B cell (primary cell): ENCODE measurements at regions of chr1 and their contacts with region 1.

Region 1: DNA sequence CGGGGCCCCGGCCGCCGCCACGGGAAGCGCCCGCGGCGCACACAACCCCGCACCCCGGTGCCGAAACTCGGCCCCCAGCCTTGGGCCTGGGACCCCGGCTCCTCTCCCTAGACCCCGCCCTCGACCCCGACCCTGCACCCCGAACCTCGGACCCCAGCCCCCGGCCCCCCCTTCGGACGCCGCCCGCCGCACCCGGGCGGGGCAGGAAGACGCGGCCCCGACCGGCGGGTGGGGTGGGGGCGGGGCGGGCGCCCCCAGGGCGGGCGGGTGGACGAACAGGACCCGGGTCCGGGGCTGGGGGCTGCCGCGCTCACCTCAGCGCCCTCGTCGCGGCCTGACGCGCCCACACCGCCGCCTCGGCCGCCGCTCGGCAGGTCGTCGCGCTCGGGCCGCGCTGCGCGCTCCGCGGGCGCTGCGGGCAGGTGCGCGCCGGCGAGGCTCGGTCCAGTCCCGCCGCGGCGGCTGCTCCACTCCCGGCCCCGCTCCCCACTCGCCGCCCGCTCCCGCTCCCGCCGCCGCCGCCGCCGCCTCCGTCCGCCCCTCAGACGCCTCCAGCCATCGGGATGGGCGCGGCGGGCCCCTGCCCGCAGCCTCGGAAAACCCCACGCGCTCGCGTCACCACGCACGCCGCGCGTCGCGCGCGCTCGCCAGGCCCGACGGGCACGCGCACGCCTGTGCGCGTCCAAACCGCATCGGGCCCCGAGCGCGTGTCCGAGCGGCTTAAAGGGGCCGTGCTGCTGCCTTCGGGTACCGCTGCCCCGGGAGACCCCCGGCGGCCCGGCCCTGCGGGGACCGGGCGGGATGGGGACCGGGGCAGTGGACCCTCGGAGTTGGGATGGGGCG is at the start of gene GNB1:
- DNase-seq: peak; percentile 98
- ATAC-seq: peak; percentile 60
- H3K4me3 ChIP-seq: peak within 1 kb of the TSS; percentile 63 to 88 (median 79)
- H3K4me3 Mint-ChIP-seq: peak within 1 kb of the TSS; percentile 91
- H3K27ac ChIP-seq: peak within 1 kb of the TSS; percentile 72 to 86
- H3K27ac Mint-ChIP-seq: peak within 1 kb of the TSS; percentile 96
- H3K4me1 ChIP-seq: peaks cover 53 to 74% of the 10 kb centered on the region in 2 donors
- H3K4me1 Mint-ChIP-seq: peaks cover 60% of the 10 kb centered on the region
- H3K27me3 ChIP-seq: no peaks in the 10 kb centered on the region
- H3K27me3 Mint-ChIP-seq: no peaks in the 10 kb centered on the region
- CTCF ChIP-seq: no peak
- total RNA-seq, gene GNB1: 249 and 291 TPM in 2 replicates

Region 2: DNA sequence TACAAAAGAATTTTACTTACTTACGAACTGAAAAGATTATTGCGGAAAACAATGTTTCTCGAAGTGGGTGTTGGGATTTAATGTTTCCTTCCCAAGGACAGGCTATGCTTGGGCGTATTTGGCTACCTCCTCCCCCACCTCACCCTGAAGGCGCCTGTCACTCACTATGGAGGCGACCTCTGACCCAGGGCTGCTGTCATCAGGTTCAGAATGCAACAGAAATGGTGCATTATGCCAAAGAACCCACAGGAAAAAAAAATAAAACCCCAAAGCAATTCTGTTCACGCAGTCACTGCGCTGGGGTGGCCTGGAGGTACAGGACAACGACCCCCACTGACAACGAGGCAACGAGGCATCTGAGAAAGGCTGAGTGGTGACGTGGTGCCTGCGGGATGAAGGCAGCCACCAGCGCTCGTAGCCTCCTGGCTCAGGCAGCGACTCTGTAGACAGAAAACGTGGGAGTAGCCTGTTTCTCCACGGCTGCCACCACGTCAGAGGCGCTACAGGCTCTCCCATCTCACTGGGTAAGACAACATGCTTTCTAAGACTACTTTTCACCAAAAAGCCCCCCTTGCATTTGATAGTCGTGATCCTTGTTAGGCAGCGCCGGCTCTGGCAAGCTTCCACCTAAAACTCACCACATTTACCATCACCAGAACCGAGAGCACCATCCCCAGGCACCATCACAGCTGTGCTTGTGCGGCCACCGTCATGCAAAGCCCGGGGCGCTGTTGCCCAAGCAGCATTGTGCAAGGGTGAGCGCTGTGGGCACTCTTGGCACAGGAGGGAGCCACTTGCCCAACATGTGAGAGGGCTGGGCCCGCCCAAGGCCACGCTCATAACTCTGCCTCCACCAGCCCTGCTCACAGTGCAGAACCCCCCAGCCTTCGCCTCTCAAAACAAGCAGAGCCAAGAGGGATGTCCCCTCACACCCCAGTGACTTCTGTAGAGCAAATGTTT is 126.8 kb before region 1 on chr1:
- CTCF ChIA-PET with region 1: no interaction called
- POLR2A ChIA-PET with region 1: no interaction called
- intact Hi-C with region 1: no loop called
- DNase-seq: peak; percentile 41
- ATAC-seq: peak; percentile 47
- H3K4me3 ChIP-seq: no peak overlapping the region
- H3K4me3 Mint-ChIP-seq: no peak overlapping the region
- H3K27ac ChIP-seq: no peak overlapping the region
- H3K27ac Mint-ChIP-seq: no peak overlapping the region
- H3K4me1 ChIP-seq: no peaks in the 10 kb centered on the region
- H3K4me1 Mint-ChIP-seq: peaks cover 5% of the 10 kb centered on the region
- H3K27me3 ChIP-seq: no peaks in the 10 kb centered on the region
- H3K27me3 Mint-ChIP-seq: no peaks in the 10 kb centered on the region
- CTCF ChIP-seq: no peak

Region 3: DNA sequence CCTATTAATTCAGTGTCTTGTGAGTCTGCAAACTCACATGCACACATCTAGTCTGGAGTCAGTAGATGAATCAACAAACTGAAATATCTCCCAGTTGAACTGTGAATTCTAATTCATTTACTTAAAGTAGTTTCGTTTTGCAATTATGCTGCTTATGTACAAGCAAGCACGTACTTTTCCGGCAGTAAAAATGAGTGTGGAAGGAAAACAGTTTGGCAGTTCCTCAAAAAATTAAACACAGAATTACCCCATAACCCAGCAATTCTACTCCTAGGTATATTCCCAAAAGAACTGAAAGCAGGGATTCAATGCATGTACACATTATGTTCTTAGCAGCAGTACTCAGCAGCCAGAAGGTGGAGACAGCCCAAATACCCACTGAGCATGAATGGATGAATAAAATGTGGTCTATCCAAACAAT is 49.1 kb before region 1 on chr1:
- CTCF ChIA-PET with region 1: no interaction called
- POLR2A ChIA-PET with region 1: interaction called, 4 read pairs
- intact Hi-C with region 1: loop called (anchors 5 kb)
- DNase-seq: no peak
- ATAC-seq: no peak
- H3K4me3 ChIP-seq: peak overlapping the region in 1 of 5 experiments; percentile 8
- H3K4me3 Mint-ChIP-seq: peak overlapping the region; percentile 88
- H3K27ac ChIP-seq: peak overlapping the region in 1 of 2 donors; percentile 64
- H3K27ac Mint-ChIP-seq: peak overlapping the region; percentile 87
- H3K4me1 ChIP-seq: peaks cover 43 to 50% of the 10 kb centered on the region in 2 donors
- H3K4me1 Mint-ChIP-seq: peaks cover 61% of the 10 kb centered on the region
- H3K27me3 ChIP-seq: no peaks in the 10 kb centered on the region
- H3K27me3 Mint-ChIP-seq: no peaks in the 10 kb centered on the region
- CTCF ChIP-seq: no peak

Region 4: GRCh38 chr1:1869469-1869868 is 21.3 kb before region 1 on chr1:
- CTCF ChIA-PET with region 1: interaction called, 3 read pairs
- POLR2A ChIA-PET with region 1: interaction called, 5 read pairs
- intact Hi-C with region 1: loop called (anchors 2 kb)
- DNase-seq: peak; percentile 59
- ATAC-seq: peak; percentile 52
- H3K4me3 ChIP-seq: no peak overlapping the region
- H3K4me3 Mint-ChIP-seq: peak overlapping the region; percentile 55
- H3K27ac ChIP-seq: peak overlapping the region; percentile 35 to 57
- H3K27ac Mint-ChIP-seq: peak overlapping the region; percentile 90
- H3K4me1 ChIP-seq: peaks cover 55 to 75% of the 10 kb centered on the region in 2 donors
- H3K4me1 Mint-ChIP-seq: peaks cover 68% of the 10 kb centered on the region
- H3K27me3 ChIP-seq: no peaks in the 10 kb centered on the region
- H3K27me3 Mint-ChIP-seq: no peaks in the 10 kb centered on the region
- CTCF ChIP-seq: no peak